SK-N-SH (cell line): ENCODE measurements at regions of chr11 and their contacts with region 1.

Region 1: DNA sequence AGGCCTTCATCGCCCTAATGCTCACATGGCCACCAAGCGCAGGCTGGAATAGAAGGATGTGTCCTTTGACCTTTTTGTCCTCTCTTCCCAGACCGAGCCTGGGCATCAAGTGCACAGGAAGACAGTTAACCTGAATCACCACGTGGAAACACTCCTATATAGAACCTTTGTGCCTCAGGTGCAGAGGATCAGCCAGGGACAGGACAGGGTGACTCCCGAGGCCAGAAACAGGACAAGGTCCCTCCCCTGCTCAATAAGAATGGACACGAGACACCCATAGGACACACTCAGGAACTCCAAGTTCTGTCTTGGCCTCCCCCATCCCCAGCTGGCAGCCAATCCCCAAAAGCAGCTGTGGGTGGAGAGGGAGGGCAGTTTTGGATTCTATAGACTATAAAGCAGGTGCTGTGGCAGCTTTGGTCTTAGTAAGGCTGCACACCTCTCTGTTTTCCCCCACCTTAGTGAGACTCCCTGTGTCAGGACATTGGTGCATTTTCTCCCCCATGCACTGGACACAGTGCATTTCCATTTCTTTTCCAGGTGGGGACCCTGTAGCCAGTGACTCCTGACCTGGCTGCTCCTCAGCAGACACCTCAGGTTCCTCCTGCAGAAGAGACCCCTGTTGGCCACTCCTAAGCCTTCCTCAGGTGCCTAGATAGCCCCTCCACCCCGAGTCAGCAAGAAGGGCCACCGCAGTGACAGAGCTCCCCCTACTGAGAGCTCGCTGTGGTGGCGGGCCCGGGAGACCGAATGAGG is 43.6 kb upstream of the POU2AF1 start:
- DNase-seq: peak; percentile 64
- H3K4me3 ChIP-seq: peak overlapping the region in 1 of 2 experiments; percentile 26; a peak in 1 of 4 replicates
- H3K27ac ChIP-seq: no peak overlapping the region
- H3K4me1 ChIP-seq: peaks cover 0 to 6% of the 10 kb centered on the region in 2 experiments; a peak in 1 of 4 replicates
- H3K27me3 ChIP-seq: no peaks in the 10 kb centered on the region; the same call in 1 of the 2 replicates
- CTCF ChIP-seq: peak; percentile 68
- EP300 ChIP-seq: no peak
- RAD21 ChIP-seq: peak; percentile 91

Region 2: DNA sequence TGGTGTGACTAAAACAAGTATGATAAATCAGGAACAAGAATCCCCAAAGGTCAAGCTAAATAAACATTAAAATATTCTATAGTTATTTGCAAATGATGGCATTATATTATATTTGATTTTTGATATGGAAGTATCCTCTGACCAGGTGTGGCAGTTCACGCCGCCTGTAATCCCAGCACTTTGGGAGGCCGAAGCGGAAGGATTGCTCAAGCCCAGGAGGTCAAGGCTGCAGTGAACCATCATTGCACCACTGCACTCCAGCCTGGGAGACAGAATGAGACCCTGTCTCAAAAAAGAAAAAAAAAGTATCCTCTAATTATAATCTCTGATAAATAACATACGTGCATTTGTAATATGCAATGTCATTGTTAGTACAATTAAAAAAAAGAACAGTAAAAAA is 130.9 kb before region 1 on chr11:
- CTCF ChIA-PET with region 1: interaction called, 57 read pairs
- POLR2A ChIA-PET with region 1: no interaction called
- DNase-seq: no peak
- H3K4me3 ChIP-seq: no peak overlapping the region
- H3K27ac ChIP-seq: no peak overlapping the region
- H3K4me1 ChIP-seq: no peaks in the 10 kb centered on the region
- H3K27me3 ChIP-seq: no peaks in the 10 kb centered on the region
- CTCF ChIP-seq: no peak
- EP300 ChIP-seq: no peak
- RAD21 ChIP-seq: no peak

Region 3: DNA sequence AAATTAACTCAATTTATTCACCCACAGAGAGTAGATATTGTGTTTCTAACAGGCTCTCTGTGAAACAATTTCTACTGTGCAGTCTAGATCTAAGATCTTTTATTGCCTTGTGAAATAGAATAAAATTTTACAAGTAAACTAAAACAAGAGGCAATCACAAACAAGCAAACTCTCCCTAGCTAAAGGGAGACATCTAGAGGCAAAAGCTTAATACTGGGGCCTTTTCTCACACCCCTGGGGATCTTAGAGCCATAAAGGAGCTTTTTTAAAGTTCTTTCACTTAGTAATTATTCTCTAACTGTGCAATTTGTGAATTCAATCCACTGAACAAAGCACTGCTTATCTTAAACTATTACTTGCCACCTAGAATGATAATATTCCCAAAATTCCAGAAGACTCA is 429.0 kb after region 1 on chr11:
- CTCF ChIA-PET with region 1: no interaction called
- POLR2A ChIA-PET with region 1: no interaction called
- DNase-seq: peak; percentile 17
- H3K4me3 ChIP-seq: no peak overlapping the region
- H3K27ac ChIP-seq: no peak overlapping the region
- H3K4me1 ChIP-seq: peaks cover 6 to 13% of the 10 kb centered on the region in 2 experiments; a peak in 3 of 4 replicates
- H3K27me3 ChIP-seq: no peaks in the 10 kb centered on the region
- CTCF ChIP-seq: peak; percentile 56
- EP300 ChIP-seq: no peak
- RAD21 ChIP-seq: peak; percentile 60